ENCODE measurements at regions of chr2 and their contacts with region 1.

Region 1: GRCh38 chr2:1742681-1743395 is 1.5 kb downstream of the PXDN start:
- DNase-seq: peak; percentile 79

Region 2: DNA sequence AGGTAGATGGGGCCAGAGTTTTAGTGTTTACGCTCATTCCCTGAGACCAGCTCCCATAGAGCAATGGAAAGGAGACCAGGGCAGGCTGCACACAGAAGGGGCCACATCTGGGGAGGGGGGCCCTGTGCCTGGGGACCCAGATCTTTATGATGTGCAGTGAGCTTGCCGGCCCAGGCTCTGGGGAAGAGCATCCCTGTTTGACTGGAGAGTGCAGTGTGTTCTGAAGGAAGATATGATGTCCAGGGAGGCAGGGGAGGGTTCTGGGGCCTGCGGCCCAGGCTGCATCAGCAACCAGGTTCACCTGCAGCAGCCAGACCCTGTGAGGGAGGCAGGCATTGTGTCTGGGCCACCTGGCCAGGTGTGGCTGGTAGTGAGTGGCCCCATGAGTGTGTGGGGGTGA is 315.8 kb before region 1 on chr2:
- intact Hi-C with region 1: no loop called
- DNase-seq: no peak

Region 3: DNA sequence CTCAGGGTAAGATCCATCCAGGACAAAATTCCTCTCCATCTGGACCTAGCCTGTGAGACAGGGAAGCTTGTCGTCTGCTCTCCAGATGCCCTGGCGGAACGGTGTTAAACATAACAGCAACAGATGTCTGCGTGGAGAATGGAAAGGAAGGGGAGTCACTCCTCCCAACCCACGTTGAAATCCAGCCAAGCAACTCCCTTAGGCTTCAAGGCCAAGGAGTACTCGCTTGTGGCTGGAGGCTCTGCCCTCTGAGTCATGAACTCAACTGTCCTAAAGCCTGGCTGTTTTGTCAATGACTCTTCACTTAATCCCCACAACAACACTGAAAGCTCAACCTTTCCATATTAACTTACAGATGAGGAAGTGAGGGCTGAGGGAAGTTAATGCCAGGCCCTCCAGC is 287.4 kb before region 1 on chr2:
- intact Hi-C with region 1: no loop called
- DNase-seq: peak; percentile 76

Region 4: DNA sequence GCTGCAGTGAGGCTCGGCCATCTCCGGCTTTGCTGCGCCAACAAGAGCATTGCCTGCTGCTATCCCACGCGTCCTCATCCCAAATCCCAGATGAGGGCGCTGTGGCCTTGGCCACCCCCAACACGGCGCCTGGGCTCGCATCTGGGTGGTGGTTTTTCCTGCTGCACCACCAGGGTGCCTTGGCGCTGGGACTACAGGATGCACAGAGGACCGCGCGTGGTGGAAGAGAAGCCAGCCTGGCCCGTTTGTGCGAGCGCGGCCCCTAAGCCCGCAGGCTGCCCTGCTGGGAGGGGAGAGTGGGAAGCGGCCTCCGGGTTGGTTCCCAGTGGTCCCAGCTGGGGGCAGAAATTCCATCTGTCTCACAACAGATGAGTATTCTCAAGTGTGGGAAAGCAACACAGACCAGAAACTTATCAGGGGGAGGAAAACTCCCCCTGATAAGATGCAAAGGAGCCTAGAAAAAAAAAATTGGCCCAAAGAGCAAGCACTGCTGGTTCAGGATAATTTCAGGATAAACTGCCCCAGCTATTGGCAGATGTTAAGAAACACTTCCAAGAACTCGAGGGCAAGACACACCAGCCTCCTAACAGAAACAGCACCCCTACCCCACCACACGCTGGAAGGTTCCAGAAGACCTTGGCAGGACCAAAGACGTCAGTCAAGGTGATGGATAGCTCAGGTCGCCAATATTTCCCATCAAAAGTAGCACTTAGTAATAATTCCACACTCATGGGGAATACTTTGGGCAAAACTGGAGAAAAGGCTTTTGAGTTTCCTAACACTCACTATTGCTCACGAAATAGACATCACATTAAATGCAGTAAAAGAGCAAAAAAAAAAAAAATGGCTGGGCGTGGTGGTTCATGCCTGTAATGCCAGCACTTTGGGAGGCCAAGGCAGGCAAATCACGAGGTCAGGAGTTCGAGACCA is 150.6 kb before region 1 on chr2:
- intact Hi-C with region 1: loop called (anchors 2 kb)
- DNase-seq: peak; percentile 39

Region 5: DNA sequence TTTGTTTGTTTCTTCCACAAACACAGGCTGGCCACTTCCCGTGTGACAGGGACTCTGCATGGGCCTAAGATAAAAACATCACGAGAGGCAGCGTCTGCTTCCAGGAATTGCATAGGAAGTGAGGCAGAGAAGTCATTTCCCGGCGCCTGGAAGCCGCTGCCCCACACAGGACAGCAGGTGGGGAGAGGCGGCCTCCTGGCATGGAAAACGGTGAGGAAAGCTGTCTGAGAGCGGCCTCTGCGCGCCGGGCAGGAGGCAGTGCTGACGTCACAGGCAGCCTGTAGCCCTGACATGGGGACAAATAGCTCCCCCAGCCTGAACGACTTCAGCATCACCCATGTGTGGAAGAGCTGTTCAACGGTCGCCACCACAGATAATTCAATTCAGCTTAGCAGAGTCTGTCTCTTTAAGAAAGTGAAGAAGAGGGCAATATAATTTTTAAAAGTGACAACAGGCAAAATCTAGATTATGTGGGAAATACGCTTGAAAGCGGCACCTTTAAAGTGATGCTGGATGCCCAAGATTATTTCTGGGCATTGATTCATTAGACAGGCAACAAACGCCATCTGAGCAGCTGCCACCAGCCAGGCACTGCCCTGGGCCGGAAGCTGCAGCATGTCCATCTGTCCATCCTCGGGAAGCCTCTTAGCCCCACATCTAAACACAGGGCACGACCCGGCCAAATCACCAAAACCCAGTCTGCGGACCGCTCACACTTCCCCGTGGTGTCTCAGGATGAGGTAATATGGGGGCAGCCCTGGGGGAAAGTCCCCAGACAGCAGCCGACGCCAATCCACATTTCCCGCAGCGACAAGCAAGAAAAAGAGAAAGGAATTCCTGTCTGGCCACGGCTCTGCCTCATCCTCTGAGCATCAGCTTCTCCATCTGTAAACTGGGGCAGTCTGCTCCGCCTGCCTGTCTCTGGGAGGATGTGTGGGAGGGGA is 137.5 kb before region 1 on chr2:
- intact Hi-C with region 1: loop called (anchors 5 kb)
- DNase-seq: peak; percentile 81

Region 6: GRCh38 chr2:1653956-1654695 is 88.7 kb before region 1 on chr2:
- intact Hi-C with region 1: loop called (anchors 5 kb)
- DNase-seq: no peak

Region 7: DNA sequence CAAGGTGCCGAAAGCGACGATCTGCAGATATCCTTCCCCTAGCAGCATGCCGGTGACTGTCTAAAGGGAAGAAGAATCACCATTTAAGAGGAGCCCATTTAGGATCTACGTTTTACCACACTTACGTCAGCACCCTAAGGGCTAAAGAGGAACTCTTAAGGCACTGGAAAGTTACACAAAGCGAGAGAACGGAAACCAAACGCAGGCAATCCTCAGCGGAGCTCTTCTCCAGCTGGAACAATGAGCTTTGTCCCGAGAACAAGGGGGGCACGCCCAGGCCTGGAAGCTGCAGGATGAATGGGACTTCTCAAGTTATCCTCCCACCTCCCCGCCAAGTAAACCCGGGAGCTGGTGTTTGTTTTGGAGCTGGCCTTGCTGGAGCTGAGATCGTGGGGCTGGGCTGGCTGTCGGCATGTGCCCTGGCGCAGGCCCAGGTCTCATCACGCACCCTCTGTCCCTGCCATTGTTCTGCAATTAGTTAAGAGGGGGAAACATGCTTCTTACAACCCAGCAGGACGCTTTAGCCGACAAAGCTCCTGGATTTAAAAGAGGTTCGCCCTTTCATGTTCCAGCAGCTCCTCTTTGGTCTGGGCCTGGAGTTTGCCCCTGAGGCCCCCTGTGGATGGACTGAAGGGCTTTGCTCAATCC is 34.9 kb before region 1 on chr2:
- intact Hi-C with region 1: loop called (anchors 5 kb)
- DNase-seq: no peak

Region 8: GRCh38 chr2:1717113-1717512 is 25.7 kb before region 1 on chr2:
- intact Hi-C with region 1: loop called (anchors 2 kb)
- DNase-seq: no peak

Measured in cardiac septum (tissue), 1 donor.